CD4-positive, alpha-beta T cell (primary cell): ENCODE measurements at regions of chr3 and their contacts with region 1.

Region 1: GRCh38 chr3:60135474-60135873 is 1085.6 kb upstream of the CFAP20DC start:
- DNase-seq: no peak
- ATAC-seq: no peak
- H3K4me3 ChIP-seq: no peak overlapping the region
- H3K4me3 Mint-ChIP-seq: no peak overlapping the region
- H3K27ac ChIP-seq: no peak overlapping the region
- H3K27ac Mint-ChIP-seq: no peak overlapping the region
- H3K4me1 ChIP-seq: no peaks in the 10 kb centered on the region
- H3K4me1 Mint-ChIP-seq: peaks cover 8% of the 10 kb centered on the region
- H3K27me3 ChIP-seq: no peaks in the 10 kb centered on the region
- H3K27me3 Mint-ChIP-seq: no peaks in the 10 kb centered on the region
- CTCF ChIP-seq: no peak

Region 2: DNA sequence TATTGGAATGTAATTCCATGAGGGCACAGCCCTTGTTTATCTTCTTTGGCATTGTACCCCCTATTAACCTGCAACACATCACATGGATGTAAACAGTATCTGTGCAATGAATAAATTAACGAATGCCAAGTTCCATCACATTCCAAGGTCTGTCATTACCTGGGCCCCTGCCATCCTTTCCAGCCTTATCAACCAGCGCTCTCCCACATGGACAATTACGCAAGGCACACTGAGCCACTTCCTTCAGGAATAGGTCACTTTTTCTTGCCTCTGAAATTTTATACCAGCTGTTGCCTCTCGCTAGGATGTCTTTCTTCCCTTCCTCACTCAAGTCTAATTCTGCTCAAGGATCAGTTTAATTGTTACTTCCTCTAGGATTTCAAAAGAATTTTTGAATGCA is 33.9 kb before region 1 on chr3:
- CTCF ChIA-PET with region 1: no interaction called
- POLR2A ChIA-PET with region 1: no interaction called
- intact Hi-C with region 1: loop called in 1 of 2 experiments (anchors 5 kb)
- DNase-seq: no peak
- ATAC-seq: no peak
- H3K4me3 ChIP-seq: no peak overlapping the region
- H3K4me3 Mint-ChIP-seq: no peak overlapping the region
- H3K27ac ChIP-seq: no peak overlapping the region
- H3K27ac Mint-ChIP-seq: no peak overlapping the region
- H3K4me1 ChIP-seq: no peaks in the 10 kb centered on the region
- H3K4me1 Mint-ChIP-seq: peaks cover 41% of the 10 kb centered on the region
- H3K27me3 ChIP-seq: no peaks in the 10 kb centered on the region
- H3K27me3 Mint-ChIP-seq: no peaks in the 10 kb centered on the region
- CTCF ChIP-seq: no peak